ENCODE measurements at regions of chr19 and their contacts with region 1.

Region 1: DNA sequence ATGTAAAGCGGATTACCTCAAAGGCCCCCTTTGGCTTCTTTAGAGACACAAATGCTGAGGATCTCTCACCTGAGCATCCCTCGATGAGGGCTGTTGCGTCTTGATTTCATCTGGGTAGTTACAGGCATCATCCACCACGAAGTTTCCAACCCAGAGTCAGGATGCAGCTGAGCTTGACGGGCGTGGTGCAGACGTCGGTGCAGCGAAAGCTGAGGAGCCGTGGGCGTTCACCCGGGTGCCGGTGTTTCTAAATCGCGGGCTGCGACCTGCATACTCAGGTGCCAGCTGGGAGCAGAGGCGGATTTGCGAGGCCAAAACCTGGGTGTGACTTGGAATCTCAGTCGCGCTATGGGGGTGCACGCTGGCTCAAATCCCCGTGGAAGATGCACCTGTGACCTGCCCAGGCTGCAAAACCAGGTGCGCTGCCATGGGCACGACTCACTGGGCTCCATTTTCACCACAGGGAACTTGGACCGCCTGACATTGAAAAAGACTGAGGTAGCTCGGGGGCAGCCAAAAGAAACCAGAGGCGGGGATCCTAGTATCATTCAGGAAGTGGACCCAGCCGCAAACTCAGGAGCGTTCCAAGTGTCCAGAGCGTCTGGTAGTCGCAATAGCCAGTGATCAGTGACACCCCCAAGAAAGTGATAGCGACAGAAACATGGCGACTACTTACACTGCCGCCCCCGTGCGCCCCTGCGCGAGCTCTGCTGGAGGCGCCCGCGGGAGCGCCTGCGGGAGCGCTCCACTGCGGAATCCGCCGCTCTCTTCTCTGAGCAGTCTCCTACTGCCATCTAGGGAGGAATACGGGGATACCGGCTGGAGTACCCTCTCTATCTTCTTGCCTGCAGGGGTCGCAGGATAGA is 36.4 kb upstream of the IGFL4 start:
- DNase-seq: peak; percentile 37 to 69 (median 48)
- ATAC-seq: peak; percentile 95
- H3K4me3 ChIP-seq: no peak overlapping the region
- H3K4me1 ChIP-seq: peaks cover 8% of the 10 kb centered on the region
- CTCF ChIP-seq: no peak

Region 2: GRCh38 chr19:46021531-46022041 is 55.6 kb before region 1 on chr19:
- intact Hi-C with region 1: loop called in 1 of 2 experiments (anchors 10 kb)
- DNase-seq: peak in 2 of 3 donors; percentile 43
- ATAC-seq: peak; percentile 60
- H3K4me3 ChIP-seq: no peak overlapping the region
- H3K4me1 ChIP-seq: no peaks in the 10 kb centered on the region
- CTCF ChIP-seq: no peak

Region 3: DNA sequence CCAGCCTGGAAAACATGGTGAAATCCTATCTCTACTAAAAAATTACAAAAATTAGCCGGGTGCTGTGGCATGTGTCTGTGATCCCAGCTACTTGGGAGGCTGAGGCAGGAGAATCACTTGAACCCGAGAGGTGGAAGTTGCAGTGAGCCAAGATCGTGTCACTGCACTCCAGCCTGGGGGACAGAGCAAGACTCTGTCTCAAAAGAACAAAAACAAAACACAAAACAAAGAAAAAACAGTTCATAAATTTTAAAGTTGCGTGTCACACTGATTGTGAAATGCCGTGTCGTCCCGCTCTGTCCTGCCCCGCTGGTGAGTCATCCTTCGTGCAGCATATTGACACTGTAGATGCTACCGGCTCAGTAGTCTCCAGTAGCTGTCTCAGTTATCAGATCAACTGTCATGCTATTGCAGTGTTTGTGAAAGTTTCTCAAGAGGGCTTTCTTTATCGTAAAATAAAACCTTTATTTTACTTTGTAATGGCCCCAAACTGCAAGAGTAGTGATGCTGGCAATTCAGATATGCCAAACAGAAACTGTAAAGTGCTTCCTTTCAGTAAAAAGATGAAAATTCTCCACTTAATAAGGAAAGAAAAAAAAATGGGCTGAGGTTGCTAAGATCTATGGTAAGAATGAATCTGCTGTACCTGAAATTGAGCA is 115.9 kb after region 1 on chr19:
- intact Hi-C with region 1: loop called (anchors 2 to 10 kb)
- DNase-seq: peak in 1 of 3 donors; percentile 10
- ATAC-seq: peak; percentile 75
- H3K4me3 ChIP-seq: no peak overlapping the region
- H3K4me1 ChIP-seq: no peaks in the 10 kb centered on the region
- CTCF ChIP-seq: no peak